ENCODE measurements at regions of chr17 and their contacts with region 1.

Region 1: DNA sequence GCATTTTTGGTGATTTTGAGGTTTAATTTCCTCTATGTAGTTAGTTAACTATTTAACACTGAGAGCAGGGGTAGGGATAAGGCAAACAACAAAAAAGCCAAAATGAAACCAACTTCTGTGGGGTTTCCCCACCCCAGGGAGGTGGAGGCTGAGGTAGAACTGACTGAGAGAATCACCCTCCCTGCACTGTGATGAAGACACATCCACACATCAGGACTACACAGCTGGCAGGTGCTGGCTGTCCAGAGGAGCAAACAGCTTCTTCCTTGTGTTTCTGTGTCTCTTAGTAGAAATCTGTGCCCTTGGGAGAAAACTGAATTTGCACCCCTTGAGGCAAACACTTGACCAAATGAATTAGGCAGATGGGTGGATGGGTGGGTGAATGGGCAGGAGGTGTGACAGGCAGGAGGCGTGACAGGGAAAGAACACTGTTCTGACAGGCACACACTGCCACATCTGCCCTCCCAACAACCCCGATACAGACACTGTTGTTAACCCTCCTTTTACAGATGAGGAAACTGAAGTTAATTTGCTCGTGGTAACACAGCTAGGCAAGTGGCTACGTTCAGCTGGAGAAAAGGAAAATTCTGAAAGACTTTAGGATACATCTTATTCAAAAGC is 62.9 kb upstream of the AMZ2 start:
- DNase-seq: peak; percentile 73
- H3K4me3 Mint-ChIP-seq: peak overlapping the region; percentile 43
- H3K27ac Mint-ChIP-seq: peak overlapping the region; percentile 80
- H3K4me1 Mint-ChIP-seq: peaks cover 57% of the 10 kb centered on the region
- H3K27me3 Mint-ChIP-seq: no peaks in the 10 kb centered on the region

Region 2: DNA sequence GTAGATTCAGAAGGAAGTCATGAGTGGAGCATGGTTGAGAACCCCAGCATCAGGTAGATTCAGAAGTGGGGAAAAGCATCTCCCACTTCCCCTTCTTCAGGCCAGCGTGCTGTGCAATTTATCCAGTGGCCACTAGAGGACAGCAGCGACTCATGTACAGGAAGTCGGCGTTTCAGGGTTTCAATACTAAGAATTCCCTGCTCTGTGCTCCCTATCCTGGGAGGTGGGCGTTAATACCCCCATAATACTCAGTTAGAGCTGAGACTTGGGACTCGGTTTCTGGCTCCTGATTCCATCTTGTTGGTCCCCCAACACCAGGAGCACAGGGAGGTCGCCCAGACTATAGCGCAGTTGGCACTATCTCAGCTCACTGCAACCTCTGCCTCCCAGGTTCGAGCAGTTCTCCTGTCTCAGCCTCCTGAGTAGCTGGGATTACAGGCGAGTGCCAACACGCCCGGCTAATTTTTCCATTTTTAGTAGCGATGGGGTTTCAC is 12.4 kb before region 1 on chr17:
- CTCF ChIA-PET with region 1: interaction called, 32 read pairs
- POLR2A ChIA-PET with region 1: interaction called, 4 read pairs
- DNase-seq: peak; percentile 81
- H3K4me3 Mint-ChIP-seq: no peak overlapping the region
- H3K27ac Mint-ChIP-seq: no peak overlapping the region
- H3K4me1 Mint-ChIP-seq: peaks cover 27% of the 10 kb centered on the region
- H3K27me3 Mint-ChIP-seq: no peaks in the 10 kb centered on the region

Region 3: GRCh38 chr17:68205251-68205807 is 20.4 kb after region 1 on chr17:
- CTCF ChIA-PET with region 1: interaction called, 105 read pairs
- POLR2A ChIA-PET with region 1: interaction called, 153 read pairs
- DNase-seq: peak; percentile 93
- H3K4me3 Mint-ChIP-seq: peak overlapping the region; percentile 83
- H3K27ac Mint-ChIP-seq: peak overlapping the region; percentile 87
- H3K4me1 Mint-ChIP-seq: peaks cover 33% of the 10 kb centered on the region
- H3K27me3 Mint-ChIP-seq: peaks cover 2% of the 10 kb centered on the region

Region 4: GRCh38 chr17:68247445-68248198 is 62.7 kb after region 1 on chr17 and contains the start of gene AMZ2:
- CTCF ChIA-PET with region 1: interaction called, 10 read pairs
- POLR2A ChIA-PET with region 1: interaction called, 58 read pairs
- DNase-seq: peak; percentile 97
- H3K4me3 Mint-ChIP-seq: peak within 1 kb of the TSS; percentile 85
- H3K27ac Mint-ChIP-seq: peak within 1 kb of the TSS; percentile 90
- H3K4me1 Mint-ChIP-seq: peaks cover 42% of the 10 kb centered on the region
- H3K27me3 Mint-ChIP-seq: no peaks in the 10 kb centered on the region
- total RNA-seq, gene AMZ2: 106 to 121 TPM

Region 5: DNA sequence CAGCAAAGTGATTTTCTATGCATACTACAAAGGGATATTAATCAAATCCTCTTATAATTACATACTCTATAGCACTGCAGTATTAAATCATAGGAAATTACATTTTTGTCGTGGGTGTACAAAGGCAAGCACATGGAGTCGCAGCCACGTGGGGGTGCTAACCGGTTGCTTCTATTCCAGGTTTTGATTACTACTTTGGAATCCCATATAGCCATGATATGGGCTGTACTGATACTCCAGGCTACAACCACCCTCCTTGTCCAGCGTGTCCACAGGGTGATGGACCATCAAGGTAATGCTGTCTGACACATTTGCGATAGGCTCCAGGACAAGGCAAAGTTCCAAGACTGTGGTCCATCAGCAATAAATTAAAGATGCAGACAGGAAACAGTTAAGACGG is 166.5 kb after region 1 on chr17:
- CTCF ChIA-PET with region 1: no interaction called
- POLR2A ChIA-PET with region 1: no interaction called
- DNase-seq: no peak
- H3K4me3 Mint-ChIP-seq: no peak overlapping the region
- H3K27ac Mint-ChIP-seq: no peak overlapping the region
- H3K4me1 Mint-ChIP-seq: peaks cover 93% of the 10 kb centered on the region
- H3K27me3 Mint-ChIP-seq: no peaks in the 10 kb centered on the region

Region 6: GRCh38 chr17:68468334-68468733 is 283.4 kb after region 1 on chr17:
- CTCF ChIA-PET with region 1: interaction called, 19 read pairs
- POLR2A ChIA-PET with region 1: interaction called, 3 read pairs
- DNase-seq: no peak
- H3K4me3 Mint-ChIP-seq: no peak overlapping the region
- H3K27ac Mint-ChIP-seq: no peak overlapping the region
- H3K4me1 Mint-ChIP-seq: peaks cover 11% of the 10 kb centered on the region
- H3K27me3 Mint-ChIP-seq: peaks cover 29% of the 10 kb centered on the region

Region 7: GRCh38 chr17:68627956-68628575 is 443.1 kb after region 1 on chr17:
- CTCF ChIA-PET with region 1: no interaction called
- POLR2A ChIA-PET with region 1: no interaction called
- DNase-seq: no peak
- H3K4me3 Mint-ChIP-seq: no peak overlapping the region
- H3K27ac Mint-ChIP-seq: no peak overlapping the region
- H3K4me1 Mint-ChIP-seq: no peaks in the 10 kb centered on the region
- H3K27me3 Mint-ChIP-seq: peaks cover 14% of the 10 kb centered on the region